Esophagus squamous epithelium (tissue), 5 donors: ENCODE measurements at regions of chr2 and their contacts with region 1.

Region 1: GRCh38 chr2:130181325-130181879 is at the start of gene SMPD4:
- DNase-seq: peak; percentile 81
- H3K4me3 ChIP-seq: peak within 1 kb of the TSS; percentile 74 to 96 (median 86)
- H3K27ac ChIP-seq: peak within 1 kb of the TSS; percentile 88 to 98 (median 94)
- H3K4me1 ChIP-seq: peaks cover 19 to 38% (median 20%) of the 10 kb centered on the region in 3 donors
- H3K27me3 ChIP-seq: no peaks in the 10 kb centered on the region
- CTCF ChIP-seq: no peak
- POLR2A ChIP-seq: peak in 2 of 4 donors; percentile 33 to 47
- total RNA-seq, gene SMPD4: 34.1 to 50.6 (median 40.6) TPM

Region 2: DNA sequence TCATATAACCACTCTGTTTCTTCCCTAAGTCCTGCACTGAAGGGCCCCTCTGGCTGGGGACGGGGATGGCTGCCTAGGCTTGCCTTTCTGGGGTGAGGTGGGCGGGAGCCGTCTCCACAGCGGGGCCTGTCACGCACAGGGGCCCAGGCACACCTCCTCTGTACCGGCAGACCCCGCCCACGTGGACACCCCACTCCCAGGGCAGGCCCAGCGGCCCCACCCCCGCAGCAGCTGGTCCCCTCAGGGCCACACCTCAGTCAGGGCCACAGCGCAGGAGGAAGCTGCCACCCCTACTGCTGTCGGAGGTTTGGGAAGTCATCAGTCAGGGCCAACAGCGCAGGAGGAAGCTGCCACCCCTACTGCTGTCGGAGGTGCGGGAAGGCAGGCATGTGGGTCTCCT is 459.6 kb before region 1 on chr2:
- intact Hi-C with region 1: no loop called
- DNase-seq: no peak
- H3K4me3 ChIP-seq: no peak overlapping the region
- H3K27ac ChIP-seq: no peak overlapping the region
- H3K4me1 ChIP-seq: peaks cover 0 to 24% (median 0%) of the 10 kb centered on the region in 3 donors
- H3K27me3 ChIP-seq: peaks cover 0 to 5% (median 0%) of the 10 kb centered on the region in 4 donors
- CTCF ChIP-seq: no peak
- POLR2A ChIP-seq: no peak

Region 3: GRCh38 chr2:129903586-129904425 is 277.6 kb before region 1 on chr2:
- intact Hi-C with region 1: no loop called
- DNase-seq: no peak
- H3K4me3 ChIP-seq: no peak overlapping the region
- H3K27ac ChIP-seq: no peak overlapping the region
- H3K4me1 ChIP-seq: no peaks in the 10 kb centered on the region
- H3K27me3 ChIP-seq: peaks cover 0 to 10% (median 0%) of the 10 kb centered on the region in 4 donors
- CTCF ChIP-seq: no peak
- POLR2A ChIP-seq: no peak

Region 4: GRCh38 chr2:130261970-130262760 is 80.8 kb after region 1 on chr2:
- intact Hi-C with region 1: no loop called
- DNase-seq: no peak
- H3K4me3 ChIP-seq: no peak overlapping the region
- H3K27ac ChIP-seq: no peak overlapping the region
- H3K4me1 ChIP-seq: no peaks in the 10 kb centered on the region
- H3K27me3 ChIP-seq: peaks cover 0 to 63% (median 0%) of the 10 kb centered on the region in 4 donors
- CTCF ChIP-seq: no peak
- POLR2A ChIP-seq: no peak

Region 5: GRCh38 chr2:130342533-130343275 is 161.3 kb after region 1 on chr2 and contains the start of gene IMP4:
- intact Hi-C with region 1: loop called (anchors 5 kb)
- DNase-seq: peak; percentile 95
- H3K4me3 ChIP-seq: peak within 1 kb of the TSS; percentile 70 to 94 (median 84)
- H3K27ac ChIP-seq: peak within 1 kb of the TSS; percentile 85 to 96 (median 95)
- H3K4me1 ChIP-seq: peaks cover 20 to 36% (median 21%) of the 10 kb centered on the region in 3 donors
- H3K27me3 ChIP-seq: no peaks in the 10 kb centered on the region
- CTCF ChIP-seq: peak in 3 of 6 experiments; percentile 11 to 45 (median 36)
- POLR2A ChIP-seq: peak in 1 of 4 donors; percentile 19
- total RNA-seq, gene IMP4: 69.2 to 112 (median 91.2) TPM

Region 6: GRCh38 chr2:131492418-131493198 is 1311.2 kb after region 1 on chr2:
- intact Hi-C with region 1: loop called (anchors 5 kb)
- DNase-seq: peak; percentile 74
- H3K4me3 ChIP-seq: peak overlapping the region; percentile 80 to 89 (median 86)
- H3K27ac ChIP-seq: peak overlapping the region; percentile 92 to 95 (median 94)
- H3K4me1 ChIP-seq: peaks cover 23 to 44% (median 24%) of the 10 kb centered on the region in 3 donors
- H3K27me3 ChIP-seq: no peaks in the 10 kb centered on the region
- CTCF ChIP-seq: peak; percentile 66 to 83 (median 72)
- POLR2A ChIP-seq: peak in 2 of 4 donors; percentile 11 to 33